Heart right ventricle (tissue), 16 donors: ENCODE measurements at regions of chrX and their contacts with region 1.

Region 1: DNA sequence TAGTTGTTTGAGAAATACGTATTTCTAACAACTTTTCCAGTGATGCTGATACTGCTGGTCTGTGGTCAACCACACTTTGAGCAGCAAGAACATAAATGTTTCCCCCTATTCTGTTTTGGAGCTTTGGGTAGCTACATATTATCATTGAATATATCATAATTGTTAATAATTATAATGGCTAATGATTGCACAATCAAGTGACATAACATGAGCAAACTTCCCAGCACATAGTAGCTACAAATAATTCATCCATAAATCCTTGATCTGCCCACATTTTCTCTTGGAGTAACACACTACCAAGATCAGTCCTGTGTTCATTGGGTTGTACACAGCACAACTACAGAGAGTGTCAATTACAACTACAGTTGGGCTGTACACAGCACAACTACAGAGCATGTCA is 436.3 kb upstream of the MAGEB18 start:
- DNase-seq: no peak
- ATAC-seq: no peak
- H3K4me3 ChIP-seq: no peak overlapping the region
- H3K27ac ChIP-seq: no peak overlapping the region
- H3K4me1 ChIP-seq: no peaks in the 10 kb centered on the region
- H3K27me3 ChIP-seq: no peaks in the 10 kb centered on the region
- CTCF ChIP-seq: no peak

Region 2: DNA sequence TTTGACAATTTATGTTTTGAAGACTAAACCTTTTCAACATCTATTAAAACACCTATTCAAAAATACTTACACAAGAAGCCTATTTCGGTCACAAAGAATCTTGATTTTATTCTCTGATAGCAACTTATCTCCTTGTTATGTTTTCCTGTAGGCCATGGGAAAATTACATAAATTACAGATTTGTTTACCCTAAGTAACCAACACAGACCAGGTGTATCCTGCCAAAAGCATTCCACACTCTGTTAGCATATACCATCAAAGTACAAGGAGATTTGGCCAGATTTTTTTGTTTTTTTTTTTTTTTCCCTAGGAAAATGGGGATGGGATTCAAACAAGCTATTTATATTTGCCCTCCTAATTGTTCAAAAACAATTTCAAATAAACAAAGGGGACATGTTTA is 61.6 kb before region 1 on chrX:
- intact Hi-C with region 1: loop called in 1 of 10 experiments (anchors 10 kb)
- DNase-seq: no peak
- ATAC-seq: no peak
- H3K4me3 ChIP-seq: no peak overlapping the region
- H3K27ac ChIP-seq: no peak overlapping the region
- H3K4me1 ChIP-seq: no peaks in the 10 kb centered on the region
- H3K27me3 ChIP-seq: no peaks in the 10 kb centered on the region
- CTCF ChIP-seq: no peak